ENCODE measurements at regions of chr1 and their contacts with region 1.

Region 1: GRCh38 chr1:65067491-65068201 is 80.4 kb upstream of the AK4 start:
- DNase-seq: peak; percentile 66 to 76 (median 76)
- ATAC-seq: peak; percentile 39
- H3K4me3 ChIP-seq: peak overlapping the region; percentile 80
- H3K27ac ChIP-seq: peak overlapping the region; percentile 94
- H3K4me1 ChIP-seq: peaks cover 18 to 27% of the 10 kb centered on the region in 2 experiments; a peak in 4 of 5 replicates
- H3K27me3 ChIP-seq: no peaks in the 10 kb centered on the region
- CTCF ChIP-seq: no peak
- EP300 ChIP-seq: no peak
- POLR2A ChIP-seq: peak; percentile 87
- RAD21 ChIP-seq: no peak

Region 2: GRCh38 chr1:65049941-65050713 is 17.5 kb before region 1 on chr1:
- CTCF ChIA-PET with region 1: no interaction called
- POLR2A ChIA-PET with region 1: interaction called, 14 read pairs
- in situ Hi-C with region 1: no loop called
- intact Hi-C with region 1: no loop called
- DNase-seq: no peak
- ATAC-seq: no peak
- H3K4me3 ChIP-seq: no peak overlapping the region
- H3K27ac ChIP-seq: no peak overlapping the region
- H3K4me1 ChIP-seq: no peaks in the 10 kb centered on the region
- H3K27me3 ChIP-seq: no peaks in the 10 kb centered on the region
- CTCF ChIP-seq: no peak
- EP300 ChIP-seq: no peak
- POLR2A ChIP-seq: no peak
- RAD21 ChIP-seq: no peak

Region 3: GRCh38 chr1:65119951-65120350 is 52.3 kb after region 1 on chr1:
- CTCF ChIA-PET with region 1: no interaction called
- POLR2A ChIA-PET with region 1: no interaction called
- in situ Hi-C with region 1: no loop called
- intact Hi-C with region 1: no loop called
- DNase-seq: no peak
- ATAC-seq: no peak
- H3K4me3 ChIP-seq: no peak overlapping the region
- H3K27ac ChIP-seq: no peak overlapping the region
- H3K4me1 ChIP-seq: no peaks in the 10 kb centered on the region; a peak in 1 of 5 replicates
- H3K27me3 ChIP-seq: no peaks in the 10 kb centered on the region
- CTCF ChIP-seq: no peak
- EP300 ChIP-seq: no peak
- POLR2A ChIP-seq: no peak
- RAD21 ChIP-seq: no peak

Region 4: GRCh38 chr1:65148548-65149350 is 81.1 kb after region 1 on chr1:
- CTCF ChIA-PET with region 1: no interaction called
- POLR2A ChIA-PET with region 1: interaction called, 4 read pairs
- in situ Hi-C with region 1: no loop called
- intact Hi-C with region 1: loop called (anchors 5 kb)
- DNase-seq: peak; percentile 51 to 69 (median 60)
- ATAC-seq: peak; percentile 74
- H3K4me3 ChIP-seq: peak overlapping the region; percentile 64
- H3K27ac ChIP-seq: peak overlapping the region; percentile 61
- H3K4me1 ChIP-seq: peaks cover 10 to 26% of the 10 kb centered on the region in 2 experiments
- H3K27me3 ChIP-seq: no peaks in the 10 kb centered on the region
- CTCF ChIP-seq: no peak
- EP300 ChIP-seq: no peak
- POLR2A ChIP-seq: no peak
- RAD21 ChIP-seq: no peak

Region 5: DNA sequence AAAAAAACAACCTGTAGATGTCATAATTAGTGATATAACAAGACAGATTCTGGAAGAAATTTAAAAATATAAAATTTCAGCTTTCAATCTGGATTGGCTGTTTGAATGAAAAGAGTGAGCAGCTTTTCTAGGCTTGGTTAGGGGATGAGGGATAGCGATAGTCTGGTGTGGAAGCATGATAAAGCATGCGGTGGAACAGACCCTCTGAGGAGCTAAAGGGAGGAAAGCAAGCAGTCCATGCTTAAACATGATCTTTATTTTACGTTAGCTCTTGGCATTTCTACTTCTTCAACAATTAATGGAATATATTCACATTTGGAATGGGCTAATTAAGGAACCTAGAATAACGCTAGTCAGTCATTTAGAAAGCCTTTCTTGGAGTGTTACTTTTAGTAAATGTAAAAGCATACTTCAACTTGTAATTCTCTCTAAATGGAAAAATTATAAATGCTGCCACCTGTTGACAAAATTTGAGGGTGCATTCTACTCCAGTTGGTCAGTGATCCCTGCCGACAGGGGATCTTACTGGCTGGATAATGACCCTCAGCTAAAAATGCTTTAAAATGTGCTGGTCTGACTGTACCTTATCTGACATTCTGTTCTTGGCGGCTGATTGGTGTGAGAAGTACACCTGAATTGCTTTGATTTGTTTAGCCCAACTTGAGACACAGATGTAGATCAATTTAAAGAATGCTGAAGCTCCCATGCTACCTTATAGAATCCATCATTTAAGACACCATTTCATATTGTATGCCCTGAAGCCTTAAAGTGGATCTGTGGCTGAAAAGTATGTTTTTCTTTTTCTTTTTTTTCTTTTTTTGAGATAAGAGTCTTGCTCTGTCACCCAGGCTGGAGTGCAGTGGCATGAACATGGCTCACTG is 141.6 kb after region 1 on chr1:
- CTCF ChIA-PET with region 1: interaction called, 3 read pairs
- POLR2A ChIA-PET with region 1: no interaction called
- in situ Hi-C with region 1: loop called (anchors 5 kb)
- intact Hi-C with region 1: no loop called
- DNase-seq: peak; percentile 72 to 78 (median 75)
- ATAC-seq: peak; percentile 92
- H3K4me3 ChIP-seq: no peak overlapping the region
- H3K27ac ChIP-seq: no peak overlapping the region; the same call in 2 of the 3 replicates
- H3K4me1 ChIP-seq: peaks cover 5 to 8% of the 10 kb centered on the region in 2 experiments; a peak in 3 of 5 replicates
- H3K27me3 ChIP-seq: no peaks in the 10 kb centered on the region
- CTCF ChIP-seq: peak; percentile 69 to 82 (median 77)
- EP300 ChIP-seq: no peak
- POLR2A ChIP-seq: no peak
- RAD21 ChIP-seq: peak; percentile 71 to 84

Region 6: DNA sequence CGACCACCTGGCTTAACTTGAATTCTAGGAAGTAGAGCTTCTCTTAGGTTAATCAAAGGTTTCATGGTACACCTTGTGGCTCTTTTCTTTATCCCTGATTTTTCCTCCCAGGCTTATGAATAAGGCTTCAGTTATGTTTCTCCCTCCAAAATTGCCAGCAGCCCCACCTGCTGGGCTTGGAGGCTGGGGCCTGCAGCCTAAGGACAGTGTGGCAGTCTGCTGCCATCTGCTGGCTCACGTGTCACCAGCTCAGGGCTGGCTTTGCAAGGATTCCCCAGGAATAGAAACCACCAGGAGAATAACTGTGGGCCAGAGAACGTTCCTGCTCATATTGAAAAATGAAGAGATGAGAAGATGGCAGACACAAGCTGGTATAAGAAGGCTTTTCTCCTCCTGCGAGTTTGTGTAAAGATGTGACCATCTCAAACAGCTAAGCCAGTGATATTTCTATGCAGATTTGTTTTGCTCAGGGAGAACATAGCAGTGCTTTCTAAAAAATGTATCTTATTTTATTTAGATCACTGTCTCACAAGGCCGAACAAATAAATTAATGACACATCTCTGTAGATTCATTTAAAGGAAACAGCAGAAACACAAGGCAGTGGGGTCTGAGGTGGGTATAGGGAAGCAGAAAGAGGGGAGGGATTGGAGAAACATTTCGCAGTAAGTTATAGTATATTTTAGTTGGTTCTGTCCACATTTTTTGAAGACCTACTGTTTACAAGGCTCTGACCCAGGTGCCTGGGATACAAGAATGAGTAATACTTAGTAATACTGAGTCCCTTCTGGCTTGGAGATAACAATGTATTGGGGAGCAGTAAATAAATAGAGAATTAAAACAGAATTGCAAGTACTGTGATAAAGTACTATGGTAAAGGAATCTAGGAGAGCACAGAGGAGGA is 1175.3 kb after region 1 on chr1:
- CTCF ChIA-PET with region 1: no interaction called
- POLR2A ChIA-PET with region 1: no interaction called
- in situ Hi-C with region 1: loop called (anchors 25 kb)
- intact Hi-C with region 1: loop called (anchors 10 kb)
- DNase-seq: peak; percentile 64 to 84 (median 70)
- ATAC-seq: peak; percentile 100
- H3K4me3 ChIP-seq: no peak overlapping the region
- H3K27ac ChIP-seq: no peak overlapping the region
- H3K4me1 ChIP-seq: no peaks in the 10 kb centered on the region
- H3K27me3 ChIP-seq: peaks cover 0 to 2% of the 10 kb centered on the region in 2 experiments; a peak in 1 of 5 replicates
- CTCF ChIP-seq: peak; percentile 99 to 100 (median 100)
- EP300 ChIP-seq: no peak
- POLR2A ChIP-seq: no peak
- RAD21 ChIP-seq: peak; percentile 93 to 98

Measured in K562 (cell line).